CD4-positive, alpha-beta memory T cell (primary cell): ENCODE measurements at regions of chr10 and their contacts with region 1.

Region 1: GRCh38 chr10:87861953-87862678 is 1.2 kb downstream of the KLLN start:
- DNase-seq: peak; percentile 92 to 96 (median 94)
- H3K4me3 ChIP-seq: peak overlapping the region; percentile 91 to 95
- H3K4me3 Mint-ChIP-seq: peak overlapping the region; percentile 95 to 99 (median 97)
- H3K27ac ChIP-seq: peak overlapping the region; percentile 69
- H3K27ac Mint-ChIP-seq: peak overlapping the region; percentile 93 to 99 (median 96)
- H3K4me1 ChIP-seq: peaks cover 35% of the 10 kb centered on the region
- H3K4me1 Mint-ChIP-seq: peaks cover 25 to 60% (median 32%) of the 10 kb centered on the region in 4 donors
- H3K27me3 ChIP-seq: no peaks in the 10 kb centered on the region
- H3K27me3 Mint-ChIP-seq: peaks cover 0 to 3% of the 10 kb centered on the region in 2 donors

Region 2: GRCh38 chr10:87094373-87095235 is 767.5 kb before region 1 on chr10 and contains the starts of genes GLUD1 and SHLD2:
- CTCF ChIA-PET with region 1: no interaction called
- POLR2A ChIA-PET with region 1: no interaction called
- intact Hi-C with region 1: loop called (anchors 5 kb)
- DNase-seq: peak; percentile 86 to 90 (median 88)
- H3K4me3 ChIP-seq: peak within 1 kb of the TSS; percentile 58 to 63
- H3K4me3 Mint-ChIP-seq: peak within 1 kb of the TSS; percentile 91 to 97 (median 94)
- H3K27ac ChIP-seq: peak within 1 kb of the TSS; percentile 86
- H3K27ac Mint-ChIP-seq: peak within 1 kb of the TSS; percentile 93 to 99 (median 95)
- H3K4me1 ChIP-seq: peaks cover 51% of the 10 kb centered on the region
- H3K4me1 Mint-ChIP-seq: peaks cover 41 to 60% (median 50%) of the 10 kb centered on the region in 4 donors
- H3K27me3 ChIP-seq: no peaks in the 10 kb centered on the region
- H3K27me3 Mint-ChIP-seq: no peaks in the 10 kb centered on the region
- total RNA-seq, gene GLUD1: 75.8 to 83.8 TPM
- total RNA-seq, gene SHLD2: 24.0 to 26.5 TPM

Region 3: GRCh38 chr10:87915989-87916388 is 53.9 kb after region 1 on chr10:
- CTCF ChIA-PET with region 1: no interaction called
- POLR2A ChIA-PET with region 1: interaction called, 19 read pairs
- intact Hi-C with region 1: loop called (anchors 5 kb)
- DNase-seq: no peak
- H3K4me3 ChIP-seq: no peak overlapping the region
- H3K4me3 Mint-ChIP-seq: peak overlapping the region in 1 of 8 donors; percentile 41
- H3K27ac ChIP-seq: no peak overlapping the region
- H3K27ac Mint-ChIP-seq: no peak overlapping the region
- H3K4me1 ChIP-seq: peaks cover 47% of the 10 kb centered on the region
- H3K4me1 Mint-ChIP-seq: peaks cover 38 to 63% (median 49%) of the 10 kb centered on the region in 4 donors
- H3K27me3 ChIP-seq: no peaks in the 10 kb centered on the region
- H3K27me3 Mint-ChIP-seq: no peaks in the 10 kb centered on the region

Region 4: GRCh38 chr10:88114368-88114767 is 252.3 kb after region 1 on chr10:
- CTCF ChIA-PET with region 1: interaction called, 25 read pairs
- POLR2A ChIA-PET with region 1: interaction called, 18 read pairs
- intact Hi-C with region 1: loop called (anchors 1 kb)
- DNase-seq: peak in 2 of 5 donors; percentile 13 to 18
- H3K4me3 ChIP-seq: no peak overlapping the region
- H3K4me3 Mint-ChIP-seq: no peak overlapping the region
- H3K27ac ChIP-seq: no peak overlapping the region
- H3K27ac Mint-ChIP-seq: peak overlapping the region in 2 of 7 donors; percentile 4 to 13
- H3K4me1 ChIP-seq: peaks cover 32% of the 10 kb centered on the region
- H3K4me1 Mint-ChIP-seq: peaks cover 7 to 17% (median 10%) of the 10 kb centered on the region in 4 donors
- H3K27me3 ChIP-seq: no peaks in the 10 kb centered on the region
- H3K27me3 Mint-ChIP-seq: peaks cover 0 to 1% of the 10 kb centered on the region in 2 donors

Region 5: DNA sequence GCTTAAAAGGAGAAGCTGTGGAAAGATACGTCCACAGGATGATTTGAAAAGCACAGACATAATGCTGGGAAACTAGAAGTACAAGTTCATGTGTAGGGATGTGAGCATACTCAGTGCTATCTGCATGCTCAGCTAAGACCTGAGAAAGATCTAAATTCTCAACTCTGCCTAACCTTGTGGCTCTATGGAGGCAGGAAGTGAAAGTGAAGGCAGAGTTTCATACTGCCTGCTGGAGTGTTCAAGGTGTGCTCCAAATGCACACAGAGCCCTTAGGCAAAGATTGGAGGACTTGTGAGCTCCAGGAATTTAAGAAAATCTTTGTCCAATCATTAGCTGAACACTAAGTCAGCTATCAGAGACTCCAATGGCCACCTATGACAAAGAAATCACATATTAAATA is 530.1 kb after region 1 on chr10:
- CTCF ChIA-PET with region 1: interaction called, 225 read pairs
- POLR2A ChIA-PET with region 1: interaction called, 158 read pairs
- intact Hi-C with region 1: loop called (anchors 1 kb)
- DNase-seq: peak in 3 of 5 donors; percentile 13 to 26 (median 21)
- H3K4me3 ChIP-seq: no peak overlapping the region
- H3K4me3 Mint-ChIP-seq: peak overlapping the region in 7 of 8 donors; percentile 8 to 73 (median 12)
- H3K27ac ChIP-seq: no peak overlapping the region
- H3K27ac Mint-ChIP-seq: peak overlapping the region in 5 of 7 donors; percentile 64 to 72 (median 70)
- H3K4me1 ChIP-seq: peaks cover 42% of the 10 kb centered on the region
- H3K4me1 Mint-ChIP-seq: peaks cover 8 to 12% (median 10%) of the 10 kb centered on the region in 4 donors
- H3K27me3 ChIP-seq: no peaks in the 10 kb centered on the region
- H3K27me3 Mint-ChIP-seq: no peaks in the 10 kb centered on the region

Region 6: DNA sequence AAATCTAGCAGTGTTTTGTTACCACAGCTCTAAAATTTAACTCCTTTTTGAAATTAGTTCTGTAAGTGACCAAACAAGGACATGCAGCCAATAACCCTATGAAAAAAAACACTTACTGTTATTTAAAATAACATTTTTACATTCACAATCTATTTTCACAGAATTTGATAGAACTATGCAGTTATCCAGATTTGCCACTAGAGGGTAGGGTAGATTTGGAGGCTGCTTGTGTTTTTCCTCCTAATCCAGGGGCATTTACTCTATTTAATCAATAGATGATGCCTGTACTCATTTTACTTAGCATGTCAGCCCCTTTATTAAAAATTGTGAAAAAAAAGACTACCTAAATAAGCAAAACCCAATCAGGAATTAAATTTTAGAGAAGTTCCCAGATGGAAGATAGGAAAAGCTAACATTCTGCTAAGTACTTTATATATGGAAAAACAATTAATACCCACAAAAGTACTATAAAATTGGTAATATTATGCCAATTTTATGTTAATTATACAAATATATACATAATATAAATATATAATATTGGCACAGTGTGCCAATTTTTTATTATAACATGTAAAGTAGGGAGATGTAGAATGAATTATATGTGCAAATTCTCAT is 825.8 kb after region 1 on chr10:
- CTCF ChIA-PET with region 1: no interaction called
- POLR2A ChIA-PET with region 1: no interaction called
- intact Hi-C with region 1: loop called (anchors 10 kb)
- DNase-seq: peak in 4 of 5 donors; percentile 18 to 26 (median 21)
- H3K4me3 ChIP-seq: no peak overlapping the region
- H3K4me3 Mint-ChIP-seq: no peak overlapping the region
- H3K27ac ChIP-seq: no peak overlapping the region
- H3K27ac Mint-ChIP-seq: no peak overlapping the region
- H3K4me1 ChIP-seq: no peaks in the 10 kb centered on the region
- H3K4me1 Mint-ChIP-seq: no peaks in the 10 kb centered on the region
- H3K27me3 ChIP-seq: no peaks in the 10 kb centered on the region
- H3K27me3 Mint-ChIP-seq: peaks cover 0 to 2% of the 10 kb centered on the region in 2 donors

Region 7: DNA sequence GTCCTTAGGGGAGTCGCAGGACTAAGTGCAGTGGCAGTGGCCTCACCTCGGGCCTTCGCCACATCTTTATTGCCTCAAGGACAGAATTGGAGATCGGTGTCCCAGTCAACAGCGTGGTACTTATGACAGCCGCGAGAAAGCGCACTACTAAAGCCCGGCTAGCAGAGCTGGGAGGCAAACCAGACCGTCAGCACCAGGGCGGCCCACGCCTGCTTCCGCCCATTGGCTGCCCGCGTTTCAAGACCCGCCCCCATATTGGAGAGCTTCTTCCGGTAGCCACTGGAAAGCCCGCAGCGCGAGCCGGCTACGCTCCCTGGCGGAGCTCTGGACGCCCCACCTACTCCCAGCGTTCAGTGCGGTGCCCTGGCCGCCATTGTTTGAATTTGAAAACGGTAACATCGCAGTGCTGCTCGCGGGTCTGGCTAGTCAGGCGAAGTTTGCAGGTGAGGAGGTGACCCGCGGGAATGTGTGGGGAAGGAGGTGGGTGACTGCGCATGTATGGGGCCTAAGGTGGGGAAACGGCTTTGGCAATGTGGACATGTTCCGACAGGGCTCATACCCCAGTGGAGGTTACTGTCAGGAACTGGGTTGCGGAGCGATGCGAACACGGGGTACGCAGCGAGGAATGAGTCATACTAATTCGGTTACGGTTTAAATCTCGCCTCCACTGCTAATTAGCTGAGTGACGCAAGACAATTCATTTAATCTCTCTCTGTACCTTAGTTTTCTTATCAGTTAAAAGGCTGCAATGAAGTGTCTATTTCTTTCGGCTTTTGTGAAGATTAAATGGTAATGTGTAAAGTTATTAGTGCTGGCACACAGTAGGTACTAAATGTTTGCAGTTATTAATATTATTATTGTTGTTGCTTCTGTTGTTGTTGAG is 1839.4 kb after region 1 on chr10 and contains the start of gene KIF20B:
- CTCF ChIA-PET with region 1: no interaction called
- POLR2A ChIA-PET with region 1: no interaction called
- intact Hi-C with region 1: loop called (anchors 2 kb)
- DNase-seq: peak; percentile 95 to 97 (median 96)
- H3K4me3 ChIP-seq: peak within 1 kb of the TSS; percentile 74 to 99
- H3K4me3 Mint-ChIP-seq: peak within 1 kb of the TSS; percentile 97 to 99 (median 99)
- H3K27ac ChIP-seq: peak within 1 kb of the TSS; percentile 75
- H3K27ac Mint-ChIP-seq: peak within 1 kb of the TSS; percentile 97 to 99 (median 99)
- H3K4me1 ChIP-seq: peaks cover 35% of the 10 kb centered on the region
- H3K4me1 Mint-ChIP-seq: peaks cover 21 to 53% (median 33%) of the 10 kb centered on the region in 4 donors
- H3K27me3 ChIP-seq: no peaks in the 10 kb centered on the region
- H3K27me3 Mint-ChIP-seq: no peaks in the 10 kb centered on the region
- total RNA-seq, gene KIF20B: 20.7 to 21.4 TPM